CD8-positive, alpha-beta T cell (primary cell): ENCODE measurements at regions of chr3 and their contacts with region 1.

Region 1: GRCh38 chr3:187738331-187739093 is 6.8 kb downstream of the BCL6 start:
- DNase-seq: peak; percentile 38 to 88 (median 65)
- ATAC-seq: peak; percentile 32
- H3K4me3 ChIP-seq: peak overlapping the region; percentile 88 to 94
- H3K4me3 Mint-ChIP-seq: peak overlapping the region; percentile 94
- H3K27ac ChIP-seq: peak overlapping the region; percentile 44 to 88
- H3K27ac Mint-ChIP-seq: peak overlapping the region; percentile 100
- H3K4me1 ChIP-seq: peaks cover 15% of the 10 kb centered on the region
- H3K4me1 Mint-ChIP-seq: peaks cover 52% of the 10 kb centered on the region
- H3K27me3 ChIP-seq: no peaks in the 10 kb centered on the region
- H3K27me3 Mint-ChIP-seq: no peaks in the 10 kb centered on the region
- CTCF ChIP-seq: peak; percentile 85

Region 2: GRCh38 chr3:187773233-187774184 is 35.0 kb after region 1 on chr3:
- CTCF ChIA-PET with region 1: no interaction called
- POLR2A ChIA-PET with region 1: no interaction called
- intact Hi-C with region 1: no loop called
- DNase-seq: peak in 1 of 9 experiments; percentile 30
- ATAC-seq: no peak
- H3K4me3 ChIP-seq: no peak overlapping the region
- H3K4me3 Mint-ChIP-seq: no peak overlapping the region
- H3K27ac ChIP-seq: no peak overlapping the region
- H3K27ac Mint-ChIP-seq: no peak overlapping the region
- H3K4me1 ChIP-seq: peaks cover 26% of the 10 kb centered on the region
- H3K4me1 Mint-ChIP-seq: peaks cover 28% of the 10 kb centered on the region
- H3K27me3 ChIP-seq: no peaks in the 10 kb centered on the region
- H3K27me3 Mint-ChIP-seq: no peaks in the 10 kb centered on the region
- CTCF ChIP-seq: no peak

Region 3: DNA sequence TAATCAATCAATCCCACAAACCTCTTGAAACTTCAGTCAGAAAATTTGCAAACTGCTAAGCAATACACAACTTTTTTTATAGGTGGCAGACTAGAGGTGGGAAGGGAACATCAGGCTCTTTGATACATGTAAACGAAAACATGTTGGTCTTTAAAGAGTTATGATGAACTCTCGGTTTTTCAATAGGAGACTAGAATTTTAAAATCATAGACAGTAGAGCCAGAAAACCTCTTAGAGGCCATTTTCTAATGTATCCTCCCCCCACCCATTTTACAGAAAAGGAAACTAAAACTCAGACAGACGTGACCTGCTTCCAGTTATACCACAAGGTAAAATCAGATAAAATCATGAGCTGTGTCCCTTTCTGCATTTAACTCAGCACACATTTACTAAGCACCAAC is 236.4 kb after region 1 on chr3:
- CTCF ChIA-PET with region 1: interaction called, 9 read pairs
- POLR2A ChIA-PET with region 1: no interaction called
- intact Hi-C with region 1: loop called in 1 of 2 experiments (anchors 5 kb)
- DNase-seq: peak in 2 of 9 experiments; percentile 51 to 63
- ATAC-seq: peak; percentile 65
- H3K4me3 ChIP-seq: peak overlapping the region; percentile 8 to 13
- H3K4me3 Mint-ChIP-seq: peak overlapping the region; percentile 68
- H3K27ac ChIP-seq: peak overlapping the region in 1 of 2 experiments; percentile 56
- H3K27ac Mint-ChIP-seq: peak overlapping the region; percentile 79
- H3K4me1 ChIP-seq: peaks cover 34% of the 10 kb centered on the region
- H3K4me1 Mint-ChIP-seq: peaks cover 51% of the 10 kb centered on the region
- H3K27me3 ChIP-seq: no peaks in the 10 kb centered on the region
- H3K27me3 Mint-ChIP-seq: no peaks in the 10 kb centered on the region
- CTCF ChIP-seq: peak; percentile 58

Region 4: GRCh38 chr3:188320757-188321156 is 582.2 kb after region 1 on chr3:
- CTCF ChIA-PET with region 1: interaction called, 5 read pairs
- POLR2A ChIA-PET with region 1: interaction called, 3 read pairs
- intact Hi-C with region 1: loop called in 1 of 2 experiments (anchors 2 kb)
- DNase-seq: no peak
- ATAC-seq: no peak
- H3K4me3 ChIP-seq: no peak overlapping the region
- H3K4me3 Mint-ChIP-seq: no peak overlapping the region
- H3K27ac ChIP-seq: no peak overlapping the region
- H3K27ac Mint-ChIP-seq: no peak overlapping the region
- H3K4me1 ChIP-seq: peaks cover 21% of the 10 kb centered on the region
- H3K4me1 Mint-ChIP-seq: peaks cover 48% of the 10 kb centered on the region
- H3K27me3 ChIP-seq: no peaks in the 10 kb centered on the region
- H3K27me3 Mint-ChIP-seq: no peaks in the 10 kb centered on the region
- CTCF ChIP-seq: no peak

Region 5: GRCh38 chr3:188664795-188665194 is 926.3 kb after region 1 on chr3:
- CTCF ChIA-PET with region 1: interaction called, 6 read pairs
- POLR2A ChIA-PET with region 1: no interaction called
- intact Hi-C with region 1: loop called in 1 of 2 experiments (anchors 1 kb)
- DNase-seq: peak in 3 of 9 experiments; percentile 4 to 42 (median 33)
- ATAC-seq: no peak
- H3K4me3 ChIP-seq: no peak overlapping the region
- H3K4me3 Mint-ChIP-seq: no peak overlapping the region
- H3K27ac ChIP-seq: no peak overlapping the region
- H3K27ac Mint-ChIP-seq: no peak overlapping the region
- H3K4me1 ChIP-seq: no peaks in the 10 kb centered on the region
- H3K4me1 Mint-ChIP-seq: no peaks in the 10 kb centered on the region
- H3K27me3 ChIP-seq: no peaks in the 10 kb centered on the region
- H3K27me3 Mint-ChIP-seq: no peaks in the 10 kb centered on the region
- CTCF ChIP-seq: no peak

Region 6: GRCh38 chr3:188941103-188941502 is 1202.6 kb after region 1 on chr3:
- CTCF ChIA-PET with region 1: interaction called, 36 read pairs
- POLR2A ChIA-PET with region 1: no interaction called
- intact Hi-C with region 1: no loop called
- DNase-seq: peak in 1 of 9 experiments; percentile 16
- ATAC-seq: no peak
- H3K4me3 ChIP-seq: no peak overlapping the region
- H3K4me3 Mint-ChIP-seq: no peak overlapping the region
- H3K27ac ChIP-seq: no peak overlapping the region
- H3K27ac Mint-ChIP-seq: no peak overlapping the region
- H3K4me1 ChIP-seq: no peaks in the 10 kb centered on the region
- H3K4me1 Mint-ChIP-seq: no peaks in the 10 kb centered on the region
- H3K27me3 ChIP-seq: no peaks in the 10 kb centered on the region
- H3K27me3 Mint-ChIP-seq: no peaks in the 10 kb centered on the region
- CTCF ChIP-seq: no peak

Region 7: DNA sequence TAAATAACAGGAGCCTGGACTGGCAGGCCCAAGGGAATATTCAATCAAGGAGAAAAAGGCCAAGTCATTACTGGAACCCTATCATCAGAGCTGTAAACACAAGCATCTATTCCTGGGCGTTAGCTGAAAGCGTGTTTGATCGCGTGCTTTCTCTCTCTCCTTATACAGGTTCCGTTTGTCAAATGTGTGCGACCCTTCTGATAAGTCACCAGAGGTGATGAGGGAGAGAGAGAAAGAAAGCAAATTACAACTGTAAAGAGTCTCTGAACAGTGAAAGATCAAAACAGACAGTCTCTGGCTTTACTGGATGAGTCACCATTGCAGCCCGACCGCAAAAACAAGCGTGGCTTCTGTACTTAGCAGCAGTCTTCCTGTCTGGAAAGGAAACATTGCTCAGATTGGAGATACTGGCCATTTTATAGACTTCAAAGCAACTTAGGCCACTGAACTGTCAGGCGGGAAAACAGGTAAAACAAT is 1393.8 kb after region 1 on chr3:
- CTCF ChIA-PET with region 1: interaction called, 177 read pairs
- POLR2A ChIA-PET with region 1: interaction called, 6 read pairs
- intact Hi-C with region 1: loop called in 1 of 2 experiments (anchors 1 kb)
- DNase-seq: peak; percentile 51 to 93 (median 78)
- ATAC-seq: peak; percentile 92
- H3K4me3 ChIP-seq: peak overlapping the region in 1 of 2 experiments; percentile 4
- H3K4me3 Mint-ChIP-seq: peak overlapping the region; percentile 71
- H3K27ac ChIP-seq: peak overlapping the region; percentile 47 to 86
- H3K27ac Mint-ChIP-seq: peak overlapping the region; percentile 97
- H3K4me1 ChIP-seq: peaks cover 24% of the 10 kb centered on the region
- H3K4me1 Mint-ChIP-seq: peaks cover 30% of the 10 kb centered on the region
- H3K27me3 ChIP-seq: no peaks in the 10 kb centered on the region
- H3K27me3 Mint-ChIP-seq: no peaks in the 10 kb centered on the region
- CTCF ChIP-seq: no peak